ENCODE measurements at regions of chr1 and their contacts with region 1.

Region 1: DNA sequence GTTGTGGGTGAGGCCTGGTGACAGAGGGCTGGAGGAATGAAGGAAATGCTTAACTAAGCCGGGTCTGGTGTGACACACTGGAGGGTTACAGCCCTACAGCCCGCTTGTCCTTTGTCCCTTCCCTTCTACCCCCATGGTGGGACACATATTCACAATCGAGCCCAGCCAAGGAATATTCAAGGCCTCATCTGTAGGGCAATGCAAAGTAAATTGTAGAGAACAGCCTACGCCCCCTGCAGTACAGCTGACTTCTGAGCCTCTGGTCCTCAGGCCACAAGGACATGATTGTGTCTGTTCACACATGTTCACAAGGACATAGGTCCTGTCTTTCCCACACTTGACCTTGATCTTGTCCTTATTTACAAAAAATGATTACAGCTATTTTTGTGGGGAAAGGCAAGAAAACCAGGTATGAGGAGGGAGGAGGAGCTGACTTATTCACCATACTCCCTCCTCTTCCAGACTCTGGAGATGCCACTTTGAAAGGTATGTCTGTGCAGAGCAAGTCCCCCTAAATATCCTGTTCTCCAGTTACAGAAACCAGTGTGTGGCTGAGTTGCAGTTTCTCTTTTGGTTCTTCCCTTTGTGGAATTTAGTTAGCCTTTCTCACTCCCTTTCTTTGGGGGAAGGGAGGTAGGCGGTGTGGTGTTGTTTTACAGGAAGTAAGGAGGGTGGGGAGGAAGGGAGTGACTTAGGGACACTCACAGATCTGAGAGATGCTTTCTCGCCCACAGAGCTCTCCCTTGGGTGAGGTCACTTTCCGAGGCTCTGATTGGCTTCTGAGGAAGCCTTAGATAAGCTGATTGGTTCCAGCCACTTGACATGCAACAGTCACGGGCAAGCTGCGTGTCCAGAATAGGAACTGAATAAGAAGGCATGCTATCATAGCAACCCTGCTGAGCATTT is 14.6 kb downstream of the POLR3GL start:
- DNase-seq: peak; percentile 91
- H3K4me3 Mint-ChIP-seq: no peak overlapping the region
- H3K27ac Mint-ChIP-seq: no peak overlapping the region
- H3K4me1 Mint-ChIP-seq: peaks cover 32% of the 10 kb centered on the region
- H3K27me3 Mint-ChIP-seq: no peaks in the 10 kb centered on the region

Region 2: DNA sequence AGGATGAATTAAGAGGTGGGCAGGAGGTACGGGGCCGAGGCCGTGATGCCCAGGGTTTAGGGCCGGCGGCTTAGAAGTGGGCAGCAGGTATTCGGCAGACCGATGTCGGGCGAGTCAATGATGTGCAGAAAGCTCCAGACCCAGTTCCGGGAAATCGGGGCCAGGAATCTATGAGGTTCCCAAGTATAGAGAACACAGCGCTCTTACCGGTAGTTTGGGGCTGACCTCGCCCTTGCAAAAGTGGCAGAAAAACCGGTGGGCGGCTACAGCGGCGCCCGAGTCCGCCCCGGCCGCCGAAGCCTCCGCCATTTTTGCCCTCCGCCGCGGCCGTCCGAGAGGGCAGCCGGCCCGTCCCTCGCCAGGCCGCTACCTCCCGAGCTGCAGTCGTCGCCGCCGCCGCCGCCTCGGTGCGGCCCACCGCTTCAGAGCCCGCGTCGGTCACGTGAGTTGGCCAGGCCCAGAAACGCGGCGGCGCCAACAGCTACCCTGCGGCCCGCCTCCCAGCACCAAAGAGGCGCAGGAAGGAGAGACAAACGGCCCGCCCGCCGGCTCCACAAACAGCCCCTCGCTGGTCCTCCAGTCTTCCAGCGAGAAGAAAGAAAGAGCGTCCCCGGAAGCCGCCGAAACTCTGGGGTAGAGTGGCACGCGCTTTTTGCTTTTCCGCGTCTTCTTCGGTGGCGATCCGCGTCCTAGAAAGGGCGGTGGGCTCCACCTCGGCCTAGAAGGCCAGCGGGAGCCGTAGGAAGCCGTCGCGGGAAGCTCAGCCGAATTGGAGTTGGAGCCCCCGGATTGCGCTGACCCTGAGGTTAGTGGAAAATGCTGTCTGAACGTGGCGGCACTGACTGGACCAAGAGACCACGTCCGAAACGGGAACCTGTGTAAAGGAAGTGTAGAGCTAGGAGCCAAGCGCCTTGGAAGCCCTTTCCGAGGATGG is 155.3 kb before region 1 on chr1 and contains the starts of genes POLR3C and RNF115:
- CTCF ChIA-PET with region 1: no interaction called
- POLR2A ChIA-PET with region 1: interaction called, 17 read pairs
- DNase-seq: peak; percentile 92
- H3K4me3 Mint-ChIP-seq: peak within 1 kb of the TSS; percentile 96
- H3K27ac Mint-ChIP-seq: peak within 1 kb of the TSS; percentile 95
- H3K4me1 Mint-ChIP-seq: peaks cover 37% of the 10 kb centered on the region
- H3K27me3 Mint-ChIP-seq: no peaks in the 10 kb centered on the region
- total RNA-seq, gene POLR3C: 34.5 to 38.7 TPM
- total RNA-seq, gene RNF115: 14.8 to 15.6 TPM

Region 3: GRCh38 chr1:145858894-145859490 is 120.1 kb before region 1 on chr1 and contains the start of gene PIAS3:
- CTCF ChIA-PET with region 1: interaction called, 10 read pairs
- POLR2A ChIA-PET with region 1: no interaction called
- DNase-seq: peak; percentile 87
- H3K4me3 Mint-ChIP-seq: peak within 1 kb of the TSS; percentile 91
- H3K27ac Mint-ChIP-seq: peak within 1 kb of the TSS; percentile 88
- H3K4me1 Mint-ChIP-seq: peaks cover 24% of the 10 kb centered on the region
- H3K27me3 Mint-ChIP-seq: peaks cover 10% of the 10 kb centered on the region
- total RNA-seq, gene PIAS3: 17.9 to 18.8 TPM

Region 4: GRCh38 chr1:145963995-145964901 is 14.9 kb before region 1 on chr1 and contains the starts of genes ANKRD34A and POLR3GL:
- CTCF ChIA-PET with region 1: interaction called, 43 read pairs
- POLR2A ChIA-PET with region 1: interaction called, 4 read pairs
- DNase-seq: peak; percentile 97
- H3K4me3 Mint-ChIP-seq: peak within 1 kb of the TSS; percentile 95
- H3K27ac Mint-ChIP-seq: peak within 1 kb of the TSS; percentile 89
- H3K4me1 Mint-ChIP-seq: peaks cover 54% of the 10 kb centered on the region
- H3K27me3 Mint-ChIP-seq: peaks cover 4% of the 10 kb centered on the region
- total RNA-seq, gene ANKRD34A: 2.0 to 2.2 TPM
- total RNA-seq, gene POLR3GL: 27.3 to 29.2 TPM

Region 5: GRCh38 chr1:145996433-145997015 is 17.4 kb after region 1 on chr1 and contains the start of gene TXNIP:
- CTCF ChIA-PET with region 1: interaction called, 190 read pairs
- POLR2A ChIA-PET with region 1: interaction called, 22 read pairs
- DNase-seq: peak; percentile 96
- H3K4me3 Mint-ChIP-seq: peak within 1 kb of the TSS; percentile 94
- H3K27ac Mint-ChIP-seq: peak within 1 kb of the TSS; percentile 99
- H3K4me1 Mint-ChIP-seq: peaks cover 62% of the 10 kb centered on the region
- H3K27me3 Mint-ChIP-seq: no peaks in the 10 kb centered on the region
- total RNA-seq, gene TXNIP: 240 to 262 TPM

Region 6: GRCh38 chr1:146012737-146013403 is 33.8 kb after region 1 on chr1:
- CTCF ChIA-PET with region 1: interaction called, 190 read pairs
- POLR2A ChIA-PET with region 1: no interaction called
- DNase-seq: peak; percentile 76
- H3K4me3 Mint-ChIP-seq: no peak overlapping the region
- H3K27ac Mint-ChIP-seq: no peak overlapping the region
- H3K4me1 Mint-ChIP-seq: peaks cover 16% of the 10 kb centered on the region
- H3K27me3 Mint-ChIP-seq: peaks cover 21% of the 10 kb centered on the region

Region 7: GRCh38 chr1:146019231-146020057 is 40.3 kb after region 1 on chr1:
- CTCF ChIA-PET with region 1: interaction called, 15 read pairs
- POLR2A ChIA-PET with region 1: no interaction called
- DNase-seq: no peak
- H3K4me3 Mint-ChIP-seq: no peak overlapping the region
- H3K27ac Mint-ChIP-seq: no peak overlapping the region
- H3K4me1 Mint-ChIP-seq: peaks cover 7% of the 10 kb centered on the region
- H3K27me3 Mint-ChIP-seq: peaks cover 72% of the 10 kb centered on the region

Measured in activated CD4-positive, alpha-beta T cell treated with anti-CD3 and anti-CD28 coated beads, Interleukin-2, amount 10 ng/mL, durations not matched to agents 7 days and 5 days (primary cell).